T-cell (primary cell): ENCODE measurements at regions of chr13 and their contacts with region 1.

Region 1: DNA sequence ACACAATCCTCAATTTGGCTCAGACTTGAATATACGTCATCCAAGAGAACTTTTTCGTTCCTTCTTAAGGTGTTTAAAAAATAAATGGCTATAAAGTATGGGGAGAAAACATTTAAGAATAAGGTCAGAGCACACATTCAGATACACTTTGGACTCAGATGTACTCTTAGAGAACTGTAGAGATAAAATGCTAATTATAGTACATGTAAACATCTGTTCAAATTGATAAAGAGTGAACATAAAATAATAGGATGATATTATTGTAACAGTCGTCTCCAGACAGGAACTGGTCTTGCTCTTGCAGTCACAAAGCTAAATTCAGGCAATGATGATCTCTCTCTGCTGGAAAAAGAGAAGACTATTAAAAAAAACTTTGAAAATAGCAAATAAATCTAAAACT is 91.4 kb downstream of the RBM26 start:
- DNase-seq: no peak
- ATAC-seq: no peak
- H3K4me3 ChIP-seq: no peak overlapping the region
- H3K4me3 Mint-ChIP-seq: no peak overlapping the region
- H3K27ac ChIP-seq: no peak overlapping the region
- H3K27ac Mint-ChIP-seq: no peak overlapping the region
- H3K4me1 ChIP-seq: no peaks in the 10 kb centered on the region
- H3K4me1 Mint-ChIP-seq: peaks cover 0 to 4% (median 3%) of the 10 kb centered on the region in 3 donors
- H3K27me3 ChIP-seq: no peaks in the 10 kb centered on the region
- H3K27me3 Mint-ChIP-seq: no peaks in the 10 kb centered on the region

Region 2: GRCh38 chr13:79182156-79182555 is 132.5 kb before region 1 on chr13:
- CTCF ChIA-PET with region 1: no interaction called
- POLR2A ChIA-PET with region 1: no interaction called
- DNase-seq: no peak
- ATAC-seq: no peak
- H3K4me3 ChIP-seq: no peak overlapping the region
- H3K4me3 Mint-ChIP-seq: no peak overlapping the region
- H3K27ac ChIP-seq: no peak overlapping the region
- H3K27ac Mint-ChIP-seq: no peak overlapping the region
- H3K4me1 ChIP-seq: no peaks in the 10 kb centered on the region
- H3K4me1 Mint-ChIP-seq: no peaks in the 10 kb centered on the region
- H3K27me3 ChIP-seq: peaks cover 0 to 6% of the 10 kb centered on the region in 2 experiments
- H3K27me3 Mint-ChIP-seq: peaks cover 19% of the 10 kb centered on the region in 2 donors

Region 3: GRCh38 chr13:79212064-79212619 is 102.5 kb before region 1 on chr13:
- CTCF ChIA-PET with region 1: no interaction called
- POLR2A ChIA-PET with region 1: no interaction called
- DNase-seq: no peak
- ATAC-seq: no peak
- H3K4me3 ChIP-seq: no peak overlapping the region
- H3K4me3 Mint-ChIP-seq: no peak overlapping the region
- H3K27ac ChIP-seq: no peak overlapping the region
- H3K27ac Mint-ChIP-seq: no peak overlapping the region
- H3K4me1 ChIP-seq: no peaks in the 10 kb centered on the region
- H3K4me1 Mint-ChIP-seq: no peaks in the 10 kb centered on the region
- H3K27me3 ChIP-seq: no peaks in the 10 kb centered on the region
- H3K27me3 Mint-ChIP-seq: peaks cover 22% of the 10 kb centered on the region in 2 donors

Region 4: GRCh38 chr13:79382545-79383289 is 68.1 kb after region 1 on chr13:
- CTCF ChIA-PET with region 1: interaction called, 3 to 4 read pairs
- POLR2A ChIA-PET with region 1: interaction called in 1 of 2 experiments, 15 read pairs
- DNase-seq: no peak
- ATAC-seq: peak; percentile 54 to 69 (median 62)
- H3K4me3 ChIP-seq: no peak overlapping the region
- H3K4me3 Mint-ChIP-seq: peak overlapping the region; percentile 37 to 67 (median 49)
- H3K27ac ChIP-seq: no peak overlapping the region
- H3K27ac Mint-ChIP-seq: peak overlapping the region; percentile 62 to 82
- H3K4me1 ChIP-seq: peaks cover 6 to 28% of the 10 kb centered on the region in 2 experiments
- H3K4me1 Mint-ChIP-seq: peaks cover 66 to 74% (median 70%) of the 10 kb centered on the region in 3 donors
- H3K27me3 ChIP-seq: no peaks in the 10 kb centered on the region
- H3K27me3 Mint-ChIP-seq: no peaks in the 10 kb centered on the region

Region 5: GRCh38 chr13:79477968-79478367 is 163.3 kb after region 1 on chr13:
- CTCF ChIA-PET with region 1: no interaction called
- POLR2A ChIA-PET with region 1: no interaction called
- DNase-seq: no peak
- ATAC-seq: no peak
- H3K4me3 ChIP-seq: no peak overlapping the region
- H3K4me3 Mint-ChIP-seq: no peak overlapping the region
- H3K27ac ChIP-seq: no peak overlapping the region
- H3K27ac Mint-ChIP-seq: no peak overlapping the region
- H3K4me1 ChIP-seq: peaks cover 9 to 12% of the 10 kb centered on the region in 2 experiments
- H3K4me1 Mint-ChIP-seq: peaks cover 26 to 36% (median 29%) of the 10 kb centered on the region in 3 donors
- H3K27me3 ChIP-seq: no peaks in the 10 kb centered on the region
- H3K27me3 Mint-ChIP-seq: no peaks in the 10 kb centered on the region

Region 6: GRCh38 chr13:79585033-79585432 is 270.4 kb after region 1 on chr13:
- CTCF ChIA-PET with region 1: no interaction called
- POLR2A ChIA-PET with region 1: interaction called in 1 of 2 experiments, 15 read pairs
- DNase-seq: no peak
- ATAC-seq: no peak
- H3K4me3 ChIP-seq: no peak overlapping the region
- H3K4me3 Mint-ChIP-seq: no peak overlapping the region
- H3K27ac ChIP-seq: no peak overlapping the region
- H3K27ac Mint-ChIP-seq: no peak overlapping the region
- H3K4me1 ChIP-seq: no peaks in the 10 kb centered on the region
- H3K4me1 Mint-ChIP-seq: no peaks in the 10 kb centered on the region
- H3K27me3 ChIP-seq: peaks cover 0 to 8% of the 10 kb centered on the region in 2 experiments
- H3K27me3 Mint-ChIP-seq: peaks cover 0 to 5% of the 10 kb centered on the region in 2 donors